Body of pancreas (tissue), 4 donors: ENCODE measurements at regions of chr7 and their contacts with region 1.

Region 1: DNA sequence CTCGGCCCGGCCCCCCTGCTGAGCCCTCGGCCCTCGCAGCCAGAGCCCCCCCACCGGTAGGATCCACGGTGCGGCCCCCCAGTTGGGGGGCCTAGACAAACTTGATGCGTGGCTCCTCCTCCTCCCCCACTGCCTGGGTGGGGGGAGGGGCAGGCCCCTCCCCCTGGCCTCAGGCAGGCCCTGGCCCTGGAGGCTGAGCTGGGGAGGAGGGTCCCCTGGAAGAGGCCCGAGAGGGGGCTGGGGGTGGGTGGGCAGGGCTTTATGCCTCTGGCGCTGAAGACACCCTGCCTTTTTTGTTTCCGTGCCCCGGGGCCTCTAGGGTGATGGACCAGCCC is 3.7 kb downstream of the VPS37D start:
- DNase-seq: no peak
- ATAC-seq: no peak
- H3K4me3 ChIP-seq: no peak overlapping the region
- H3K27ac ChIP-seq: no peak overlapping the region
- H3K4me1 ChIP-seq: peaks cover 18% of the 10 kb centered on the region
- H3K27me3 ChIP-seq: no peaks in the 10 kb centered on the region
- CTCF ChIP-seq: no peak
- POLR2A ChIP-seq: no peak

Region 2: DNA sequence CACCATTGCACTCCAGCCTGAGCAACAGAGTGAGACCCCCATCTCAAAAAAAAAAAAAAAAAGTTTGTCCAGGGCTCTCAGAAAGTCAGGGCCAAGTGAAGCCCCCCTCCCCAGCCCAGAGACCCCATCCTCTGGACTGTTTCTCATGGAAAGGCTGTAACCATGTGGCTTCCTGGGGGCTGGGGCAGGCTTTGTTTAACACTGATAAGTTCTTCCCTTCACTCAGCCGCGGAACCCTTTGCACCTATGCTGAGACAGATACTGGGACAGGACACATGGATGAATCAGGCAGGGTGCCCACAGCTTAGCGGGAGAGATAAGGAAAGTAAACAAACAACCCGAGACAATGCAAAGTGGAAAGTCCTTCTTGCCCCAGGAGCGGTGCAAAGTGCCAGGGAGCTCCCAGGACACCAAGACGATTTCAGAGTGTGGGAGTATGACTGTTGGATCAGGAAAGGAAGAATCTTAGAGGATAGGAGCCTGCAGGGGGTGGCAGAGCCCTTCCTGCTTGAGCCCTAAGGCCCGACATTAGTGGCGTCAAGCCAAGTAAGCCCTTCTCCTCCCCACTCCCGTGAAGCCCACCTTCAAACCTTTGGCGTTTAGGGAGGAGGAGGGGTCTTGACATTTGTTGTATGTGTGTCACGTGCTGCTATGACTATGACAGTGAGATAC is 58.5 kb before region 1 on chr7:
- intact Hi-C with region 1: no loop called
- DNase-seq: peak; percentile 52 to 71 (median 60)
- ATAC-seq: peak; percentile 52
- H3K4me3 ChIP-seq: no peak overlapping the region
- H3K27ac ChIP-seq: no peak overlapping the region
- H3K4me1 ChIP-seq: peaks cover 13% of the 10 kb centered on the region
- H3K27me3 ChIP-seq: no peaks in the 10 kb centered on the region
- CTCF ChIP-seq: peak in 1 of 7 experiments; percentile 8
- POLR2A ChIP-seq: no peak

Region 3: GRCh38 chr7:73623798-73624668 is 47.3 kb before region 1 on chr7 and contains the start of gene MLXIPL:
- intact Hi-C with region 1: loop called (anchors 5 kb)
- DNase-seq: peak; percentile 95 to 99 (median 96)
- ATAC-seq: peak; percentile 93
- H3K4me3 ChIP-seq: peak within 1 kb of the TSS; percentile 16 to 36
- H3K27ac ChIP-seq: peak within 1 kb of the TSS; percentile 50 to 73 (median 60)
- H3K4me1 ChIP-seq: peaks cover 26% of the 10 kb centered on the region
- H3K27me3 ChIP-seq: peaks cover 0 to 3% of the 10 kb centered on the region in 2 donors
- CTCF ChIP-seq: no peak
- POLR2A ChIP-seq: peak; percentile 76 to 81 (median 77)
- total RNA-seq, gene MLXIPL: 13.5 to 33.0 TPM

Region 4: GRCh38 chr7:73758581-73759138 is 87.4 kb after region 1 on chr7:
- intact Hi-C with region 1: no loop called
- DNase-seq: peak; percentile 80 to 93 (median 84)
- ATAC-seq: peak; percentile 92
- H3K4me3 ChIP-seq: no peak overlapping the region
- H3K27ac ChIP-seq: peak overlapping the region; percentile 72 to 92 (median 88)
- H3K4me1 ChIP-seq: peaks cover 43% of the 10 kb centered on the region
- H3K27me3 ChIP-seq: no peaks in the 10 kb centered on the region
- CTCF ChIP-seq: no peak
- POLR2A ChIP-seq: peak in 2 of 3 donors; percentile 65 to 67